ENCODE measurements at regions of chr1 and their contacts with region 1.

Region 1: GRCh38 chr1:11719313-11720032 is 16.5 kb upstream of the AGTRAP start:
- DNase-seq: peak; percentile 87
- H3K4me3 Mint-ChIP-seq: peak overlapping the region; percentile 74
- H3K27ac Mint-ChIP-seq: peak overlapping the region; percentile 90
- H3K4me1 Mint-ChIP-seq: peaks cover 17% of the 10 kb centered on the region
- H3K27me3 Mint-ChIP-seq: no peaks in the 10 kb centered on the region

Region 2: GRCh38 chr1:11641776-11642305 is 77.6 kb before region 1 on chr1:
- CTCF ChIA-PET with region 1: interaction called, 11 read pairs
- POLR2A ChIA-PET with region 1: no interaction called
- DNase-seq: no peak
- H3K4me3 Mint-ChIP-seq: no peak overlapping the region
- H3K27ac Mint-ChIP-seq: no peak overlapping the region
- H3K4me1 Mint-ChIP-seq: no peaks in the 10 kb centered on the region
- H3K27me3 Mint-ChIP-seq: peaks cover 2% of the 10 kb centered on the region

Region 3: GRCh38 chr1:11650331-11650991 is 69.0 kb before region 1 on chr1:
- CTCF ChIA-PET with region 1: interaction called, 20 read pairs
- POLR2A ChIA-PET with region 1: no interaction called
- DNase-seq: peak; percentile 87
- H3K4me3 Mint-ChIP-seq: peak overlapping the region; percentile 60
- H3K27ac Mint-ChIP-seq: peak overlapping the region; percentile 13
- H3K4me1 Mint-ChIP-seq: peaks cover 25% of the 10 kb centered on the region
- H3K27me3 Mint-ChIP-seq: peaks cover 14% of the 10 kb centered on the region

Region 4: GRCh38 chr1:11658308-11658941 is 61.0 kb before region 1 on chr1:
- CTCF ChIA-PET with region 1: interaction called, 19 read pairs
- POLR2A ChIA-PET with region 1: interaction called, 11 read pairs
- DNase-seq: no peak
- H3K4me3 Mint-ChIP-seq: no peak overlapping the region
- H3K27ac Mint-ChIP-seq: no peak overlapping the region
- H3K4me1 Mint-ChIP-seq: peaks cover 17% of the 10 kb centered on the region
- H3K27me3 Mint-ChIP-seq: no peaks in the 10 kb centered on the region

Region 5: DNA sequence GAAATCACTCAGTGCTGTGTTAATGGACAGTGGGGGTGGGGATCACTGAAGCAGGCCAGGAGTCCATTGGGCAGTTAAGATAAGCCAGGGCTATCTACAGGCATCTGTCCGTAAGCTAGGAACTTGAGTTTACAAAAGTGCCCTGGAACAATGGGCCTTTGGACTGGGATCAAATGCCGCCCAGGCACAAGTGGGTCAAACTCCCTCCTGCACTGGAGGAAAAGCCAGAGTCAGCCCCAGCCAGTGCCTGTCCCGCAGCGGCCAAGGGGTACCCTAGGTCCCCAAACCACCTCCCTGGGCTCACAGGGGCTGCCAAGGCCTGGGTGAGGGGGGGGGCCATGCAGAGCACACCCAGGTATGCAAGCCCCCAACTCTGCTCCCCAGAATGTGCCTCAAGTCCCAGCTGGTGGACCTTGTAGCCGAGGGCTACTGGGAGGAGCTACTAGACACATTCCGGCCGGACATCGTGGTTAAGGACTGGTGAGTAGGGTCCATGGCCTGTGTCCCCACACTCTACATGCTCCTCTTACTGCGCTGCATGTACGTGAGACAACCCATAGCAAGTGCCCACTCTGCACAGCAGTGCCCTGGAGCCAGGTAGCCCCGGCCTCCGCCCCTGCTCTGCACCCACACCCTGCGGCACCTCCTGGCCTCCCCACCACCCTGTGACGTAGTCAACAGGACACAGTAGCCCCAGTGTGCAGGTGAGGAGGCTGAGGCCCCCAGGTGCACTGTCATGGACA is 47.8 kb before region 1 on chr1:
- CTCF ChIA-PET with region 1: no interaction called
- POLR2A ChIA-PET with region 1: no interaction called
- DNase-seq: no peak
- H3K4me3 Mint-ChIP-seq: no peak overlapping the region
- H3K27ac Mint-ChIP-seq: no peak overlapping the region
- H3K4me1 Mint-ChIP-seq: peaks cover 9% of the 10 kb centered on the region
- H3K27me3 Mint-ChIP-seq: no peaks in the 10 kb centered on the region

Region 6: DNA sequence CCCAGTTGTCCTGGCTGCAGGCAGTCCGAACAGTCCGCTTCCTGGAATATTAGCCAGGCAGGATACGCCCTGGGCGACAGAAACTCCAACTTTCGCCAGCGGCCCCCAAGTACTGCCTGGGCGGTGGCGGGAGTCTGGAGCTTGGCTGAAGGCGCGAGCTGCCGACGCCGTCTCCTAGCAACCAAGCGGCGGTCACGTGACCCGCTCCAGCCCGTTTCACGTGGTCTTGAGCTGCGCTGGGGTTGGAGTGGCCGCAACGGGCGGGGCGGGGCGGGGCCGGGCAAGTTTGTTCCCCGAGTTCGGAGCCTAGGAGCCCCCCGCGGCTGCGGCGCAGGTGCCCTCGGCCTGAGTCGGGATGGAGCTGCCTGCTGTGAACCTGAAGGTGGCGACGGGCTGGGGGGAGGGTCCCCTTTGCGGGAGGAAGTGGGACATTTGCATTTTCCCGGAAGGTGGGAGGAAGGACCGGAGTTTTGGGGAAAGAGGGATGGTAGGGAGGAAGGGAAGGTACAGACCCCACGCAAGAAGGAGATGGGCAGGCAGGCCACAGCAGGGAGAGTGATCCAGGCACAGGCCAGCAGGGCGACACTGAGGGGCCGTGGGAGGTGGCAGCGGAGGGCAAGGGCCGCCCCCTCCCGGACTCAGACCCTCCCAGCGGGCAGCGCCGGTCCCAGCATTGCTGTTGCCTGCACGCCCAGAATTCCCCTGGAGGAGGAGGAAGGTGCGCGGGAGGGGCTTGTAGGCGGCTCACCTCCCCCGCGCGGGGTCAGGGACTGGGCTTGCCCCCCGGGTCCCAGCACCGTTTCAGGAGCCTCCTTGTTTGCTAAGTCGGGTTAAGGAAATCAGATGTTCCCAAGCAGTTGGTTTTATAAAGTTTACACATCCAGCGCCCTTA is 16.6 kb after region 1 on chr1 and contains the start of gene AGTRAP:
- CTCF ChIA-PET with region 1: interaction called, 10 read pairs
- POLR2A ChIA-PET with region 1: interaction called, 6 read pairs
- DNase-seq: peak; percentile 91
- H3K4me3 Mint-ChIP-seq: peak within 1 kb of the TSS; percentile 95
- H3K27ac Mint-ChIP-seq: peak within 1 kb of the TSS; percentile 87
- H3K4me1 Mint-ChIP-seq: peaks cover 72% of the 10 kb centered on the region
- H3K27me3 Mint-ChIP-seq: no peaks in the 10 kb centered on the region
- total RNA-seq, gene AGTRAP: 41.3 to 42.7 TPM